Stomach (tissue), 19 donors: ENCODE measurements at regions of chr19 and their contacts with region 1.

Region 1: DNA sequence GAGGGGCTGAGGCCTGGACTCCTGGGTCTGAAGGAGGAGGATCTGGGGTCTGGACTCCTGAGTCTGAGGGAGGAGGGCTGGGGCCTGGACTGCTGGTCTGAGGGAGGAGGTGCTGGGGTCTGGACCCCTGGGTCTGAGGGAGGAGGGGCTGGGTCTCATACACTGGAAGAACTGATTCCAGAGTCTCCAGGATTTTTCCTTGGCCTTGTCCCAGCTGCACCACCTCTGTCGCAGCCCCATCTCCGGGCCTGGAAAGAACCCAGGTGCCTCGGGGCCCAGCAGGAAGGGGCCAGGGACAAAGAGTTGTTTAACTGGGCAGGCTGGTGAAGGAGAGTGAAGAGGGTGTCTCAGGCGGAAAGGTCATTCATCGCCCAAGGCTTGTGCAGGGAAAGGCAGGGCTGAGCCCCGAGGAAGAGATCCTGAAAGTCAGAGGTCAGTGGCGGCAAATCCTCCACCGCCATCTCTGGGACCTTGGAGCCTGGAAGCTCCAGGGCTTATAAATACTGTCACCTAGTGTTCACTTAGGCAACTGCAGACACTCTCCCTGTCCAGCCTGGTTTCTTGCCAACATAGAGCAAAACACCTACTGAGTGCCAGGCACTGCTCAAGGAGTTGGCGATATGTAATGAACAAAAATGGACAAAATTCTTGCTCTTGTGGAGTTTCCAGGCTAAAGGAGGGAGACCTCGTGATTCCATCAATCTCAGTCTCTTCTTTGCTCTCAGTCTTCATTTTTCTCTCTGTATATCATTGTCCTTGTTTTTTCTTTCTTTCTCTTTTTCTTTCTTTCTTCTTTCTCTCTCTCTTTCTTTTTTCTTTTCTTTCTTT is 4.4 kb upstream of the KCNN4 start:
- DNase-seq: peak; percentile 58 to 84
- H3K4me3 ChIP-seq: no peak overlapping the region
- H3K27ac ChIP-seq: peak overlapping the region; percentile 16 to 76 (median 59)
- H3K4me1 ChIP-seq: peaks cover 9 to 49% (median 13%) of the 10 kb centered on the region in 4 donors
- H3K27me3 ChIP-seq: peaks cover 0 to 49% (median 0%) of the 10 kb centered on the region in 3 donors
- CTCF ChIP-seq: peak in 5 of 7 experiments; percentile 90 to 96 (median 93)
- EP300 ChIP-seq: no peak
- POLR2A ChIP-seq: no peak

Region 2: DNA sequence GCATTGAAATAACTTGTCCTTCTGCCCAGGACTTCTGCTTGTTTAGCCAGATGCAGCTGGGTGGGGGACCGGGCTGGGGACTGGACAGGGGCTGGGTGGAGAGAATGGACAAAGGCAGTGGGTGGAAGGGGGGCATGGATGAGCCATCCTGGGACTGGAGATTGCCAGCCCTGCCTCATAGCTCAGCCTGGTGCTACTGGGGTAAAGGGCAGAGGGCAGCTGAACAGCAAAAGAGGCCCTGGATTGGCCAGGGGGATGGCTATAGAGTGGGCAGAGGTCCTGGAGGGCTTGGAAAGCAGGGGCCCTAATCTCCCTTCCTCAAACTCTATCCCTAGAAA is 97.6 kb before region 1 on chr19:
- intact Hi-C with region 1: no loop called
- DNase-seq: no peak
- H3K4me3 ChIP-seq: no peak overlapping the region
- H3K27ac ChIP-seq: no peak overlapping the region
- H3K4me1 ChIP-seq: peaks cover 0 to 9% (median 0%) of the 10 kb centered on the region in 4 donors
- H3K27me3 ChIP-seq: no peaks in the 10 kb centered on the region
- CTCF ChIP-seq: no peak
- EP300 ChIP-seq: no peak
- POLR2A ChIP-seq: no peak

Region 3: DNA sequence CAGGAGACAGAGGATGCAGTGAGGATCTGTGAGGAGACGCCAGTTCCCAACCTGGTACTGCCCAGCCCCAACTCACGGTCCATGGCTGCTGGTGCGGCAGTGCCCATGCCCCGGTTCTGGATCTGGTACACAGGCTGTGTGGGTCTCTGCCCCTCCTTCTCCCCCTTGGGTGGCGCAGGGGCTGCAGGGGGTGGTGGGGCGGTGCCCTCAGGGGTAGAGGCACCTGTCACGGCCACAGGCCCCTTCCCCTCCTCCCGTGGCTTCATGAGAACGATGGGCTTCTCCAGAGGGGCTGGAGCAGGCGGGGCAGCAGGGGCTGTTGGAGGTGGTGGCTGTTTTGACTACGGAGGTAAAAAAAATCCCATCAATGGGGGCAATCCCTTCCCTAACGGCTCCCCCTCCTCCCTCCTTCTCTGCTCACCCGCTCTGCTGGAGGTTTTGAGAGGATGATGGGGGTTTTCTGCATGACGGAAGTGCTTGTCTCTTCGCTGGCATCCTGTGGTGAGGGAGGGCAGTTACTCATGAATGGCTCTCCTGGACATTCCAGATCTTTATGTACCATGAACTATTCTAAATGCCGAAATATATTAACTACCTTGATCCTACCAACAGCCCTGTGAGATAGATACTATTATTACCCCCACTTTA is 37.5 kb before region 1 on chr19:
- intact Hi-C with region 1: loop called (anchors 5 kb)
- DNase-seq: no peak
- H3K4me3 ChIP-seq: no peak overlapping the region
- H3K27ac ChIP-seq: no peak overlapping the region
- H3K4me1 ChIP-seq: peaks cover 5 to 35% (median 30%) of the 10 kb centered on the region in 4 donors
- H3K27me3 ChIP-seq: no peaks in the 10 kb centered on the region
- CTCF ChIP-seq: no peak
- EP300 ChIP-seq: no peak
- POLR2A ChIP-seq: no peak